B cell (primary cell): ENCODE measurements at regions of chr9 and their contacts with region 1.

Region 1: DNA sequence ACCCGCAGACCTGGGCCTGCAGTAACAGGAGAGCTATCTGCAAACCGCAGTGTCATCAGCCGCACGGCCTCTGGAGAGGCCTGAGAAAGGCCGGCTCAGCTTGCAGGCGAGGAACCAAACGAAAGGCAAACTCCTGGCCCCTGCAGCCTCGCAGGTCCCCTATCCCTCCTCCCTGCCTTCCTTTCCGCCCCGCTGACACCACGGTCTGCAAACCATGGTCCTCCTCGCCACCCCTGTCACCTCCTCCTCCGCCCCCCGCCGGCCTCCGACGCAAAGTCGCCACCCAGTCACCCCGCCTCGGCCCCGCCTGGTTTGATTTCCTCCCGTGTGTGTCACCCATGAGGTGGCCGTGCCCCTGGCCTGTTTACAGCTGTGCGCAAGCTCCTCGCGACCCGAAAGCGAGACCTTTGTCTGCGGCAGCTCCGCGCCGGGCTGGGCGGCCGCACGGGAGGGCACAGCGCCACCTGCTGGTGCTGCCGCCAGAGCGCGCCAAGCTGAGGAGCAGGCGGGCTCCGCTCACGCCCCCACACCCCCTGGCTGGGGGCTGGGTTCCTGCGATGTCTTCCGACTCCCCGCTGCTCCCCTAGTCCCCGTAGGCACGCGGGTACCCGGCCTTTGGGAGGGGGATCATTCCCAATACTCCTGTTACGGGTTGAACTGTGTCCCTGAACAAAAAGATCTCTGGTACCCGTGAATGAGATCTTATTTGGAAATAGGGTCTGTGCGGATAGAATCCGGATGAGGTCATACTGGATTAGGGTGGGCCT is 19.4 kb downstream of the GBGT1 start:
- DNase-seq: peak; percentile 94
- ATAC-seq: peak; percentile 65
- H3K4me3 ChIP-seq: peak overlapping the region in 4 of 5 experiments; percentile 28 to 43 (median 38)
- H3K4me3 Mint-ChIP-seq: peak overlapping the region; percentile 84
- H3K27ac ChIP-seq: peak overlapping the region; percentile 64 to 67
- H3K27ac Mint-ChIP-seq: peak overlapping the region; percentile 86
- H3K4me1 ChIP-seq: peaks cover 29 to 56% of the 10 kb centered on the region in 2 donors
- H3K4me1 Mint-ChIP-seq: peaks cover 64% of the 10 kb centered on the region
- H3K27me3 ChIP-seq: no peaks in the 10 kb centered on the region
- H3K27me3 Mint-ChIP-seq: no peaks in the 10 kb centered on the region
- CTCF ChIP-seq: peak; percentile 98

Region 2: DNA sequence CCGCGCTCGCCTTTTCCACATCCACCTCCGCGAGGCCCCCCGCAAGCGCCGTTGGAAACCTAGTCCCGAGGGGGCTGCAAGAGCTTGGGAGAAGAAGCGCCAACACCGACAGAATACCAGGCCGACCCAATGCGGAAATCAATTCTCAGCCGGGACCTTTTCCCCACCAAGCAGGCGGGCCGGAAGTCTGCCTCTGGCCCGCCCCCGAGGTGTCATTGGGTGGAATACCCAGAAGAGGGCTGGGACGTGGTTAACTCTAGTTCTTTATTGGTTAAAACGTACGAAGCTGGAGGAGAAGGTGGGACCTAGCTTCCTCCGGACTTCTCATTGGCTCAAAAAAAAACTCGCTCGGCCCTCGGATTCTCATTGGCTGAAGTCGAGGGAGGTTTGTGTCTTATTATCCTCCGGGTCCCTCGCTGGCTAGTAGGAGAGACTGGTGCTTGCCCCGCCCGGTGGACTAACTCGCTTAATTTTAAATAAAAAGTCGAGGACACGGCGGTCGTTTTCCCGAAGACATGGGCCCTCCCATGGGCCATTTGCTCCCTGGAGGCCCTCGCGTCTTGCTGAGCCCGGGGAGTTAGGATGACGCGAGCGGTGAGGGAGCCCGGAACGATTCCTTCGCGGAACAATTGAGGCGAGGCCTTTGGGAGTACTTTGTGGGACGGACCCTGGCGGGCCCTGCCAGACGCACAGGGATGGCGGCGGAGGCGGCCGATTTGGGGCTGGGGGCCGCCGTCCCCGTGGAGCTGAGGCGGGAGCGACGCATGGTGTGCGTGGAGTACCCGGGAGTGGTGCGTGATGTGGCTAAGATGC is 113.8 kb before region 1 on chr9 and contains the start of gene GTF3C5:
- CTCF ChIA-PET with region 1: interaction called, 11 read pairs
- POLR2A ChIA-PET with region 1: interaction called, 5 read pairs
- intact Hi-C with region 1: loop called (anchors 1 kb)
- DNase-seq: peak; percentile 97
- ATAC-seq: peak; percentile 96
- H3K4me3 ChIP-seq: peak within 1 kb of the TSS; percentile 87 to 99 (median 95)
- H3K4me3 Mint-ChIP-seq: peak within 1 kb of the TSS; percentile 97
- H3K27ac ChIP-seq: peak within 1 kb of the TSS; percentile 87 to 96
- H3K27ac Mint-ChIP-seq: peak within 1 kb of the TSS; percentile 98
- H3K4me1 ChIP-seq: peaks cover 20 to 24% of the 10 kb centered on the region in 2 donors
- H3K4me1 Mint-ChIP-seq: peaks cover 46% of the 10 kb centered on the region
- H3K27me3 ChIP-seq: no peaks in the 10 kb centered on the region
- H3K27me3 Mint-ChIP-seq: no peaks in the 10 kb centered on the region
- CTCF ChIP-seq: no peak
- total RNA-seq, gene GTF3C5: 77.3 and 80.5 TPM in 2 replicates

Region 3: DNA sequence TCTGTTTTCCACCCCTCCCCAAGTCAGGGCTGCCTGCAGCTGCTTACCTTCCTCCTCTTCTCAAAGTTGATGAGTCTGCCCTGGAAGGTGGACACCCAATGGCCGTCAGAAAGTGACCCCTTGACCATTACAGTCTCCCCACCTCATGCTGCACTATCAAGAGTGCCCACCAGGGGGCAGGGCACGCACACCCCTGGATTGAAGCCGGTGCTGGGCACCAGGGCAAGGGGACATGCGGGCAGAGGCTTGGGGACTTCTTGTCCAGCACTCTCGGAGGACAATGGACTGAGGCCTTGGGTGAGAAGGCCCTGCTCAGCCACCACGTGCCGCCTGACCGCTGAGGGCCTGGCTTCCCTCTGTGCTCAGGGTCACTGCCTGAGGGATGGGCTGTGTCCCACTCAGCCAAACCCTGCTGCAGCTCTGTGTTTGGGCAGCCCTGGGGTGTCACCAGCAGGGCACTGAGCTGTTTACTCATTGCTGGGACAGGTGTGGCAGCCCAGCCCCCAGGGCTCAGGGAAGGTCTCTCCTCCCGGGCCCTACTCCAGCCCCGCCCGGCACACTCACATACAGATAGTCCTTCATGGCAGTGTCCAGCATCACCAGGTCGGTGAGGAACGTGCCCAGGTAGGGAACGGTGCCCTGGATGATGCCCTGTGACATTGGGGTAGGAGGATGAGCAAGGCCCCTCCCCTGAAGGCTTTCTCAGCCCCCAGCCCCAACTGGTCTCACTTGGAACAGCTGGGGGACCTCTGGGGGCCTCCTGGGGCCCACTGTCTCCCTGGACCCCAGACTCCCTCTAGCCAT is 40.9 kb before region 1 on chr9:
- CTCF ChIA-PET with region 1: interaction called, 599 read pairs
- POLR2A ChIA-PET with region 1: interaction called, 5 read pairs
- intact Hi-C with region 1: loop called (anchors 1 kb)
- DNase-seq: peak; percentile 74
- ATAC-seq: peak; percentile 89
- H3K4me3 ChIP-seq: no peak overlapping the region
- H3K4me3 Mint-ChIP-seq: no peak overlapping the region
- H3K27ac ChIP-seq: no peak overlapping the region
- H3K27ac Mint-ChIP-seq: peak overlapping the region; percentile 21
- H3K4me1 ChIP-seq: no peaks in the 10 kb centered on the region
- H3K4me1 Mint-ChIP-seq: no peaks in the 10 kb centered on the region
- H3K27me3 ChIP-seq: no peaks in the 10 kb centered on the region
- H3K27me3 Mint-ChIP-seq: no peaks in the 10 kb centered on the region
- CTCF ChIP-seq: peak; percentile 97

Region 4: DNA sequence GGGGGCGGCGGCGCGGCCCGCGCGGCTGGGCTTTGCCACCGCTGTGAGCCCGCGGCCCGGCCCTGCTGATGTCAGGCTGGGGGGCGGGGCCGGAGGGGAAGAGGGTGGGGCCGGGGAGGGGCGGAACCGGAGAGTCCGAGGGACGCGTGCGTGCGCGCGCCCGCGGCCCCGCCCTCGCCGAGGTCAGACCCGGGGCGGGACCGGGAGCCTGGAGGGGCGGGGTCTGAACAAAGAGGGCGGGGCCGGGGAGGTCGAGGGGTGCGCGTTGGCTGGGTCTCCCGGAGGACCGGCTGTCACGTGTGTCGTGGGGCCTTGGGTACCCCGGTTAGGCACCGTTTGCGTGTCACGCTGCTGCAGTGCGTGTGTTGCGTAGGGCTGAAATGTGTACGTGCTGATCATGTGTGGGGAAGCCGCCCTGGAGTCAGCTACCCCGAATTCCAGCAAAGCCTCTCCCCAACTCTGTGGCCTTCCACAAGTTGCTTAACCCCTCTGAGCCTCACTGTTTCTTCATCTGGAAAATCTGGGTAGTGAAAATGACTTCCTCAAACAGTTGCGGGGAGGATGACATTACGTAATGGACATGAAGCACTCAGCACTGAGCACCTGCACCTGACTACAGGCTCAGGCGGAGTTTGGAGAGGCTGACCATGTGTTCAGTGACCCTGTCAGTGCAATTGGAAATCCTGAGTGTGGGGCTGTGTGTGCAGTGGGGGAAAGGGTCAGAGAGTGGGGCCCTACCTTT is 23.0 kb before region 1 on chr9 and contains the start of gene RALGDS:
- CTCF ChIA-PET with region 1: interaction called, 599 read pairs
- POLR2A ChIA-PET with region 1: interaction called, 9 read pairs
- intact Hi-C with region 1: loop called (anchors 1 kb)
- DNase-seq: peak; percentile 95
- ATAC-seq: peak; percentile 84
- H3K4me3 ChIP-seq: peak within 1 kb of the TSS; percentile 4 to 75 (median 56)
- H3K4me3 Mint-ChIP-seq: peak within 1 kb of the TSS; percentile 89
- H3K27ac ChIP-seq: peak within 1 kb of the TSS; percentile 97 to 99
- H3K27ac Mint-ChIP-seq: peak within 1 kb of the TSS; percentile 99
- H3K4me1 ChIP-seq: peaks cover 27 to 45% of the 10 kb centered on the region in 2 donors
- H3K4me1 Mint-ChIP-seq: peaks cover 62% of the 10 kb centered on the region
- H3K27me3 ChIP-seq: no peaks in the 10 kb centered on the region
- H3K27me3 Mint-ChIP-seq: no peaks in the 10 kb centered on the region
- CTCF ChIP-seq: no peak
- total RNA-seq, gene RALGDS: 55.7 and 62.4 TPM in 2 replicates